Activated CD4-positive, alpha-beta T cell treated with anti-CD3 and anti-CD28 coated beads, Interleukin-2, amount 10 ng/mL, durations not matched to agents 24 days and 14 days (primary cell): ENCODE measurements at regions of chr1 and their contacts with region 1.

Region 1: DNA sequence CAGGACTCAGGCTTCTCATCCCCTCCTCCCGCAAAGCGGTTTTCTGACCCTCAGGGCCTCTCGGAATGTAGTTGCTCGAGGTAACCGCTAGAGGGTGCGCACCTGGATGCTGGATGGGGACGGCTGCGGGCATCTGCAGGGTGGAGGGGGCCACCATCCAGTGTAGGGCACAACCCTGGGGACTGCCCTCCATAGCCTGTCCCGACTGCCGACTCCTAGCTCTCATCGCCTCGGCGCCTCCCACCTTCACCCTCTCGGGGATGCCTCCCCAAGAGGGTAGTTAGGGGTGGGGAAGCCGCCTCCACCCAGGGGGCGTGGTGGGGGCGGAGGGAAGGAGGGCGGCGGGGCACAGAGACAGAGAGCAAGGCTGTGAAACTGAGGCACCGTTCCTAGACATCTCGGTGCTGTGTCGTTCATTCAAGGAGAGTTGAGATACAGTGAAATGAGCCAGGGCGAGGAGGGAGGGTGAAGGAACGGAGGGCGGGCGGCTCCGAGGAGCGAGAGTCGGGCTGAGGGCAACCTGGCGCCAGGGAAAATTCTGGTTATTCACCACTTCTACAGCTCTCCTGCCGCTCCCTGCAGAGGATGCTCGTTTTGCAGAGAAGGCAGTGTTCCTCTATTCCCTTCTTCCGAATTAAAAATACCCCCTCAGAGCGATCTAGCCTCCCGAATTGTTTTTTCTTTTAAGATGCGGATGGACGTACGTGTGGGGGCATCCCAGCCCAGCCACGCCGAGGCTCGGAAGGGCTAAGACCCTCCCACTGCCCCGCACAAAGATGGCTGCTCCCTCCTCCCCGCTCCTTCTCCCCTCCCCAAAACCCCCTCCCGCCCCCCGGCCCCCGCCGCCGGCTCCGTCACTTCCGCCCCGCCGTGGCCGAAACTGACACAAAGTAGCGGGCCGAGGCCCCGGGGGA is at the start of gene ATP8B2:
- DNase-seq: peak; percentile 95
- H3K4me3 Mint-ChIP-seq: peak within 1 kb of the TSS; percentile 98
- H3K27ac Mint-ChIP-seq: peak within 1 kb of the TSS; percentile 92
- H3K4me1 Mint-ChIP-seq: peaks cover 34% of the 10 kb centered on the region
- H3K27me3 Mint-ChIP-seq: peaks cover 21% of the 10 kb centered on the region
- total RNA-seq, gene ATP8B2: 49.4 and 49.6 TPM in 2 replicates

Region 2: DNA sequence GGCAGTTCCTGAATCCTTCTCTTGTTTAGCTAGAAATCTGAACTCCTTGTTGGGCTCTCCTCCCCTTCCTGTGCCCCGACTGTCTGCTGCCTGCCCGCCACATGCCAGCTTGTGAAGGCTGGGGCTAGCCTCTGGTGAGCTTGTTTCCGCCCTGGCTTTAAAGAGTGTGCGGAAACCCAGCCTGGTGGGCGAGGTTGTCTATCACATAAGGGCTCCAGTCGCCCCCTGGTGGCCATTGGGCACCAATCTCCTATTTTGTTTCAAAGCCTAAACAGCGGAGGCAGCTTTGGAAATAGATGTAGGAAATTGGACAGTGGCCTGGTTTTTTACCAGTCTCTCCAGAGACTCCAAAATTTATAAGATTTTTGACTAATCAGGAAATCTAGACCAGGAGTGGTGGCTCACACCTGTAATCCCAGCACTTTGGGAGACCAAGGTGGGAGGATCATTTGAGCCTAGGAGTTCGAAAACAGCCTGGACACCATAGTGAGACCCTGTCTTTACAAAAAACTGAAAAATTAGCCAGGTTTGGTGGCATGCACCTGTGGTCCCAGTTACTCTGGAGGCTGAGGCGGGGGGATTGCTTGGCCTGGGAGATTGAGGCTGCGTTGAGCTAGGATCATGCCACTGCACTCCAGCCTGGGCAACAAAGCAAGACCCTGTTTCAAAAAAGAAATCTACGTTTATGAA is 10.2 kb after region 1 on chr1:
- intact Hi-C with region 1: loop called (anchors 1 kb)
- DNase-seq: peak; percentile 96
- H3K4me3 Mint-ChIP-seq: peak overlapping the region; percentile 33
- H3K27ac Mint-ChIP-seq: peak overlapping the region; percentile 82
- H3K4me1 Mint-ChIP-seq: peaks cover 60% of the 10 kb centered on the region
- H3K27me3 Mint-ChIP-seq: no peaks in the 10 kb centered on the region

Region 3: GRCh38 chr1:154342836-154343472 is 18.0 kb after region 1 on chr1:
- intact Hi-C with region 1: loop called (anchors 2 kb)
- DNase-seq: peak; percentile 93
- H3K4me3 Mint-ChIP-seq: peak overlapping the region; percentile 61
- H3K27ac Mint-ChIP-seq: peak overlapping the region; percentile 80
- H3K4me1 Mint-ChIP-seq: peaks cover 68% of the 10 kb centered on the region
- H3K27me3 Mint-ChIP-seq: no peaks in the 10 kb centered on the region